ENCODE measurements at regions of chr9 and their contacts with region 1.

Region 1: DNA sequence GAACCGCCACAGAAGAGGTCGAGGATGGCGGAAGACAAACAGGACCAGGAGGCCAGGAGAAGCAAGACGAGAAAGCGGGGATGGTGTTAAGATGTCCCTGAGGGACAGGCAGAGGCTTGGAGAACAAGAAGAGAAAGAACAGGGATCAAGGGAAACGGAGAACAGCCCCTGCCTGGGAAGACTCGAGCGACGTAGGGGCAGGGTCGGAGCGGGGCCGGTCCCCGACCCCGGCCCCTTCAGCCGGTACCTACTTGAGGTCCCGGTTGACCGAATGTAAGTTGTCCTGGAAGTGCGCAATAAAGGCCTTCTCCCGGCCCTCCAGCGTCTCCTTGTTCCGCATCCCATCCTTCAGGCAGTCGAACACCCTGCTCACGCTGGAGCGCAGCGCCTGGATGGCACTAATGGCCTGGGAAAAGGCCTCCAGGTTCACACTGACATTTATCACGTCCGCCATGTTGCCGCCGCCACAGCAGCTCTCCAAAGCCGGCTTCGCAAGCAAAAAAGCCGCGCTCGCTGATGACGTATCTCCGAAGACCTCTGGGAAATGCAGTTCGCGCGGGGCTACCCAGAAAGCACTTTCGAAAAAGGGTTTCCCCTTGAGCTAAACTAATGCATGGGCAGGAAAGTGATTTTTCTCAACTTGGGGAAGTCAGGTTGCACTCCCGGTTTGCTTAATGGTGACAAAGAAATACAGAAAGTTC is at the start of gene MED27:
- DNase-seq: peak; percentile 97
- ATAC-seq: peak; percentile 94
- H3K4me3 Mint-ChIP-seq: peak within 1 kb of the TSS; percentile 96
- H3K27ac Mint-ChIP-seq: peak within 1 kb of the TSS; percentile 86
- H3K4me1 Mint-ChIP-seq: peaks cover 41% of the 10 kb centered on the region
- H3K27me3 Mint-ChIP-seq: no peaks in the 10 kb centered on the region
- total RNA-seq, gene MED27: 29.1 to 32.5 TPM

Region 2: GRCh38 chr9:131839281-131840084 is 240.1 kb before region 1 on chr9:
- CTCF ChIA-PET with region 1: no interaction called
- POLR2A ChIA-PET with region 1: no interaction called
- intact Hi-C with region 1: loop called in 1 of 2 experiments (anchors 1 kb)
- DNase-seq: peak; percentile 86
- ATAC-seq: peak; percentile 86
- H3K4me3 Mint-ChIP-seq: peak overlapping the region; percentile 12
- H3K27ac Mint-ChIP-seq: peak overlapping the region; percentile 87
- H3K4me1 Mint-ChIP-seq: peaks cover 16% of the 10 kb centered on the region
- H3K27me3 Mint-ChIP-seq: peaks cover 7% of the 10 kb centered on the region

Region 3: DNA sequence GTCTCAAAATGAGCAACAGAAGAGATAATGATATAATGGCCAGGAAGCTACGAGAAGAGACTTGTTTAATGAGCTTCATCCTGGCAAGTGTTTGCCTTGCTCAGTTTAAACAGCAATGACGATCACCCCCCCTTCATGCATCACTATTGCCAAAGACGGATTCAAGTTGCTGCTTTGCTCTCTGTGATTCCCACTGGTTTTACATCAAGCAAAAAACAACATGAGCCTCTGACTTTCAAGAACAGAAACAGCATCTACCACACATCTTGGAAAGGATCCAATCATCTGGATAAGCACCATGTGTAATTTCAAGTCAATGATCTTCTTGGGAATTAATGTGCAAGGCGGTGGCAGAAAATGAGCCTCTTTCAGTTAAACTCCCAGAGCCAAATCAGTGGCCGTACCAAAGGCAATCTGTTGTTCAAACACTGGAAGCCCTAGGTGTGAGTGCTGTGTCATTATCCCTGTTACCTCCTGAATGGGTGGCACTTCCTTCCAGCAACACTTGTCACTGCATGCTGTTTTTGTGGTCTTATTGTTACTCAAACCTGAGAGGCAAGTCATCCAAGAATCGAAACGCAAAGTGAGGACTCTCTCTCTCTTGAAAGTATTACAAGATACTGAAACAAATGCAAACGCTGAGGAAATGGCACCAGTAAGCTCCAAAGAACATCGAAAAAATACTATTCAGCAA is 72.7 kb before region 1 on chr9:
- CTCF ChIA-PET with region 1: no interaction called
- POLR2A ChIA-PET with region 1: no interaction called
- intact Hi-C with region 1: loop called (anchors 2 to 5 kb)
- DNase-seq: peak; percentile 65
- ATAC-seq: peak; percentile 98
- H3K4me3 Mint-ChIP-seq: no peak overlapping the region
- H3K27ac Mint-ChIP-seq: no peak overlapping the region
- H3K4me1 Mint-ChIP-seq: peaks cover 28% of the 10 kb centered on the region
- H3K27me3 Mint-ChIP-seq: no peaks in the 10 kb centered on the region

Region 4: DNA sequence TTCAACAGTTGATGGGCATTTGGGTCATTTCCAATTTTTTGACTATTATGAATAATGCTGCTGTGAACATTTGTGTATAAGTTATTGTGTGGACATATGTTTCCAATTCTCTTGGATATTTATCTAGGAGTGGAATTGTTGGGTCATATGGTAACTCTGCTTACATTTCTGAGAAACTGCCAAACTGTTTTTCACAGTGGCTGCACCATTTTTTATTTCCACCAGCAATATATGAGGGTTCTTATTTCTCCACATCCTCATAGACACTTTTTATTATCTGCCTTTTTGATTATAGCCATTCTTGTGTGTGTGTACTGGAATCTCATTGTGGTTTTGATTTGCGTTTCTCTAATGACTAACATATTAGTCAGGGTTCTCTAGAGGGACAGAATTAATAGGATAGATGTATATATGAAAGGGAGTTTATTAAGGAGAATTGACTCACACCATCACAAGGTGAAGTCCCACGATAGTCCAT is 14.8 kb after region 1 on chr9:
- CTCF ChIA-PET with region 1: no interaction called
- POLR2A ChIA-PET with region 1: no interaction called
- intact Hi-C with region 1: no loop called
- DNase-seq: no peak
- ATAC-seq: no peak
- H3K4me3 Mint-ChIP-seq: no peak overlapping the region
- H3K27ac Mint-ChIP-seq: no peak overlapping the region
- H3K4me1 Mint-ChIP-seq: peaks cover 4% of the 10 kb centered on the region
- H3K27me3 Mint-ChIP-seq: peaks cover 39% of the 10 kb centered on the region

Region 5: GRCh38 chr9:132160802-132161742 is 81.5 kb after region 1 on chr9:
- CTCF ChIA-PET with region 1: interaction called, 4 read pairs
- POLR2A ChIA-PET with region 1: no interaction called
- intact Hi-C with region 1: loop called (anchors 1 to 5 kb)
- DNase-seq: peak; percentile 70
- ATAC-seq: peak; percentile 67
- H3K4me3 Mint-ChIP-seq: peak overlapping the region; percentile 78
- H3K27ac Mint-ChIP-seq: no peak overlapping the region
- H3K4me1 Mint-ChIP-seq: peaks cover 4% of the 10 kb centered on the region
- H3K27me3 Mint-ChIP-seq: peaks cover 33% of the 10 kb centered on the region

Region 6: GRCh38 chr9:132201780-132202703 is 122.5 kb after region 1 on chr9:
- CTCF ChIA-PET with region 1: no interaction called
- POLR2A ChIA-PET with region 1: no interaction called
- intact Hi-C with region 1: no loop called
- DNase-seq: no peak
- ATAC-seq: no peak
- H3K4me3 Mint-ChIP-seq: no peak overlapping the region
- H3K27ac Mint-ChIP-seq: no peak overlapping the region
- H3K4me1 Mint-ChIP-seq: no peaks in the 10 kb centered on the region
- H3K27me3 Mint-ChIP-seq: peaks cover 7% of the 10 kb centered on the region

Region 7: DNA sequence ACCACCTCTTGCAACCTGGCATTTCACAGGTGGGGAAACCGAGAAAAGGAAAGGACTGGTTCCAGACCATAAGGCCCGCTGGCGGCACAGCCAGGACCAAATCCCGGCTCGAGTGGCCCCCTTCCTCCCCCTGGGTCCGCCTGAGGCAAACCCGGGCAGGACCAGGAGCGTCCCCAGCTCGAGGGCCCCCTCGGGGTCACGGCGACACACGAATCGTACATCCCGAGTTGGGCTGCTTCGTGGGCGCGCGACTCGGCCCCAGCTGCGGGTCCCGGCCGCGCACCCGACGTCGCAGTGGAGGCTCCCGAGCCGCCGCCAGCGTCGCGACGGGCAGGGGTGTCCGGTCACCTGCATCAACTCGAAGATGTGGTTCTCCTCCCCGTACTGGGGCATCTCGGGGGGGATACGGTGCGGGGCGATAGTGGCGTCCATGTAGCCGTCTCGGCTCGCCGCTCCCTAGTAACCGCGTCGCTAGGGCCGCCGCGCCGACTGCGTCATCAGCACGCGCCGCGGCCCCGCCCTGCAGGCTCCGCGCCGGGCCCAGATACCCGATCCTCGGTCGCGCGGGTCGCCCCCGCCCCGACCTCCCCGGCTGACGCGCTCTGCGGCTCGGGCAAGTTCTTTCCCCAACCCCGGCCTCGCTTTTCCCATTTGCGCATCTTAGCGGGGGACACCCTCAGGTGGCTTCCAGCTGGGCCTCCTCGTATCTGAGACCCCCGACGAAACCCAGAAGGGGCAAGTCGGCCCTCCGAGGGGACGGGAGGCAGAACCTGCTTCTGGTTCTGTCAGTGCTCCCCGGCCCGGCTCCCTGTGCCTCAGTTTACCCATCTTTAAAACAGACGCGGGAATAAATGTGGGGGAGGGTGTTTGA is 798.5 kb after region 1 on chr9 and contains the start of gene AK8:
- CTCF ChIA-PET with region 1: no interaction called
- POLR2A ChIA-PET with region 1: no interaction called
- intact Hi-C with region 1: loop called in 1 of 2 experiments (anchors 1 kb)
- DNase-seq: peak; percentile 86
- ATAC-seq: peak; percentile 76
- H3K4me3 Mint-ChIP-seq: peak within 1 kb of the TSS; percentile 73
- H3K27ac Mint-ChIP-seq: peak within 1 kb of the TSS; percentile 13
- H3K4me1 Mint-ChIP-seq: peaks cover 21% of the 10 kb centered on the region
- H3K27me3 Mint-ChIP-seq: no peaks in the 10 kb centered on the region
- total RNA-seq, gene AK8: 0.21 TPM in 1 of 2 experiments, not detected in the other